HAP-1 (cell line): ENCODE measurements at regions of chr9 and their contacts with region 1.

Region 1: GRCh38 chr9:37903647-37904444 is at the start of gene SLC25A51:
- DNase-seq: peak; percentile 70 to 95
- H3K4me3 ChIP-seq: peak within 1 kb of the TSS; percentile 78
- H3K4me1 ChIP-seq: peaks cover 10% of the 10 kb centered on the region
- H3K27me3 ChIP-seq: no peaks in the 10 kb centered on the region

Region 2: GRCh38 chr9:37485389-37486219 is 418.2 kb before region 1 on chr9 and contains the start of gene POLR1E:
- in situ Hi-C with region 1: loop called (anchors 10 kb)
- DNase-seq: peak; percentile 92 to 97
- H3K4me3 ChIP-seq: peak within 1 kb of the TSS; percentile 89
- H3K4me1 ChIP-seq: peaks cover 15% of the 10 kb centered on the region
- H3K27me3 ChIP-seq: no peaks in the 10 kb centered on the region

Region 3: DNA sequence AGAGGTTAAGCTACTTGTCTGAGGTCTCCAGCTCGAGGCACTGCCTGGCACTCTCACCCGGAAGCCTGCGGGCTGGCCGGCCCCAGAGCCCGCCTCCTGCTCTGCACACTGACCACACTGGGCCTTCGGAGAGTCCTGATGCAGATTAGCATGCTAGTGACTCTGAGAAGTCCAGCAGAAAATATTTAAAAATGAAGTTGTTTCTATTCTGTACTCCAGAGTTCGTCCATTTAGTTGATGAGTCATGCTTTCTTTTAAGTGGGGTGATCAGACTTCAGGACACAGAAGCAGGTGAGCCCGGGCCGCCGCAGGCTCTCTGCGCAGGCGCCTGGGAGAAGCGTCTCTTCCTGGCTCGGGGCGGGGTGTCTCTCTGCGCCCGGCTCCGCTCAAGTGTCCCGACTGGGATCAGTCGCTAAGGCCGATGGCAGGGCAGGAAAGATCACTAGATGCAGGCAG is 783.6 kb after region 1 on chr9:
- in situ Hi-C with region 1: loop called (anchors 25 kb)
- DNase-seq: no peak
- H3K4me3 ChIP-seq: no peak overlapping the region
- H3K4me1 ChIP-seq: peaks cover 49% of the 10 kb centered on the region
- H3K27me3 ChIP-seq: no peaks in the 10 kb centered on the region